ENCODE measurements at regions of chr7 and their contacts with region 1.

Region 1: DNA sequence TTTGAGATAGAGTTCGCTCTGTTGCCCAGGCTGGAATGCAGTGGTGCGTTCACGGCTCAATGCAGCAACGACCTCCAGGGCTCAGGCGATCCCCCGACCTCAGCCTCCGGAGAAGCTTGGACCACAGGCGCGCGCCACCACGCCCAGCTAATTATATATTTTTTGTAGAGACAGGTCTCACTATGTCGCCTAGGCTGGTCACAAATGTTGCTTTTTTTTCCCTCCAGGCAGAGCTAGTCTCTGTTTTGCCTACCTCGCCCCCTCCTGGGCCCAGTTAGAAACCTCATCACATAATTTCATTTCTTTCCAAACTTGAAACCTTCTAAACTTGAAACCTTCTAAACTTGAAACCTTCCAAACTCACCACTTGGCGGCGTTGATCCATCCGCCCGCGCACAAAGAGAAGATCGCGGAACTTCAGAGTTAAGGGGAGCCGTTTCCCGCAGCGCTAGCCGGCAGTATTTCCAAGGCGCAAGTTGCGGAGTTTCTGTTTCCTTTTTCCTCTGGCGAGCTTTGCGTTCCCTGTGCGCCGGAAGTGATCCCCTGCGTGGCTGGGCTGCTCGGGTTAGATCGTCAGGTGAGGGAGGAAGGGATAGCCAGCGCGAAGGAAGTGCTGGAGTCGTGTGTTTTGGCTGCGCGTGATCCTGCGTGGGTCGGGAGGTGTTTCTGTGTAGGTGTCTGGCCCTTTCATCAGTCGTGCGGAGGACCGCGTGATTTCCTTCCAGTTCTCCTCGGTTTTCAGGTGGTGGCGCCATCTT is at the start of gene SSBP1:
- DNase-seq: peak; percentile 97
- ATAC-seq: peak; percentile 86
- H3K4me3 ChIP-seq: peak within 1 kb of the TSS; percentile 66 to 93 (median 90)
- H3K4me3 Mint-ChIP-seq: peak within 1 kb of the TSS; percentile 95
- H3K27ac ChIP-seq: peak within 1 kb of the TSS; percentile 84 to 92
- H3K27ac Mint-ChIP-seq: peak within 1 kb of the TSS; percentile 97
- H3K4me1 ChIP-seq: peaks cover 19 to 20% of the 10 kb centered on the region in 2 donors
- H3K4me1 Mint-ChIP-seq: peaks cover 37% of the 10 kb centered on the region
- H3K27me3 ChIP-seq: no peaks in the 10 kb centered on the region
- H3K27me3 Mint-ChIP-seq: no peaks in the 10 kb centered on the region
- CTCF ChIP-seq: peak; percentile 92
- total RNA-seq, gene SSBP1: 89.1 and 93.6 TPM in 2 replicates

Region 2: DNA sequence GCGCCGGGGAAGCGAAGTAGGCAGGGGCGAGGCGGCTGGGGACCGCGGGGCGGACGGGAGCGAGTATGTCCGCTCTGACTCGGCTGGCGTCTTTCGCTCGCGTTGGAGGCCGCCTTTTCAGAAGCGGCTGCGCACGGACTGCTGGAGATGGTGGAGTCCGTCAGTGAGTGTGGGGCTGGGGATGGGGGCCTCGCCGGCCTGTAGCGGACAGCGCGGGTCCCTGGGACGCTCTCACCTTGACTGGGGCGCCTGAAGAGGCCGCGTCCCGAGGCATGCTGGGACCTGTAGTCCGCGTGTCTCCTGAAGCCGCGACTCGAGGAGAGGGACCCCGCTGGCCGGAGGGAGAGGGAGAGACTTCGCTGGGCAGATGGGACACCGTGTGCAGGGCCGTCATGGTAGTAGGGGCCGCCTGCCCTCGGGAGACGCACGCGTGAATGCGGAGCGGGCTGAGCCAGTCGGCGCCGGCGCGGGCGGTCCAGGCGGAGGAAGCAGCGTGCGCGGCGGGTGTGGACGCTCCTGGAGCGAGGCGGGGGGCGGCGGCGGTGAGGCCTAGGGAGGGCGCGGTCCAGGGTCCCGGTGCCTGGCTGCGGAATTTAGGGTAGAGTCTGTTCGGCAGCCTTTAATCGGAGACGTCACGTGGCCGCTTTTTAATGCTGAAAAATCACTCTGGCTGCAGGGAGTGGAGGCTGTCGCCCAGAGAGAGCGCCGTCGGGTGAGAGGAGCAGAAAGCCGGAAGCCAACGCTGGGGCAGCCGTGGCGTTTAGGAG is 1041.2 kb before region 1 on chr7 and contains the start of gene NDUFB2:
- CTCF ChIA-PET with region 1: no interaction called
- POLR2A ChIA-PET with region 1: no interaction called
- intact Hi-C with region 1: loop called (anchors 1 kb)
- DNase-seq: peak; percentile 93
- ATAC-seq: peak; percentile 85
- H3K4me3 ChIP-seq: peak within 1 kb of the TSS; percentile 55 to 97 (median 94)
- H3K4me3 Mint-ChIP-seq: peak within 1 kb of the TSS; percentile 99
- H3K27ac ChIP-seq: peak within 1 kb of the TSS; percentile 84
- H3K27ac Mint-ChIP-seq: peak within 1 kb of the TSS; percentile 97
- H3K4me1 ChIP-seq: peaks cover 15 to 21% of the 10 kb centered on the region in 2 donors
- H3K4me1 Mint-ChIP-seq: peaks cover 37% of the 10 kb centered on the region
- H3K27me3 ChIP-seq: no peaks in the 10 kb centered on the region
- H3K27me3 Mint-ChIP-seq: no peaks in the 10 kb centered on the region
- CTCF ChIP-seq: no peak
- total RNA-seq, gene NDUFB2: 67.9 and 77.3 TPM in 2 replicates

Region 3: GRCh38 chr7:141551094-141551781 is 186.8 kb before region 1 on chr7 and contains the start of gene AGK:
- CTCF ChIA-PET with region 1: no interaction called
- POLR2A ChIA-PET with region 1: no interaction called
- intact Hi-C with region 1: loop called (anchors 1 kb)
- DNase-seq: peak; percentile 75
- ATAC-seq: peak; percentile 87
- H3K4me3 ChIP-seq: peak within 1 kb of the TSS; percentile 49 to 80 (median 75)
- H3K4me3 Mint-ChIP-seq: peak within 1 kb of the TSS; percentile 87
- H3K27ac ChIP-seq: peak within 1 kb of the TSS in 1 of 2 donors; percentile 78
- H3K27ac Mint-ChIP-seq: peak within 1 kb of the TSS; percentile 75
- H3K4me1 ChIP-seq: peaks cover 12% of the 10 kb centered on the region in 2 donors
- H3K4me1 Mint-ChIP-seq: peaks cover 29% of the 10 kb centered on the region
- H3K27me3 ChIP-seq: no peaks in the 10 kb centered on the region
- H3K27me3 Mint-ChIP-seq: no peaks in the 10 kb centered on the region
- CTCF ChIP-seq: no peak
- total RNA-seq, gene AGK: 26.1 and 30.2 TPM in 2 replicates

Region 4: GRCh38 chr7:141701489-141702046 is 36.4 kb before region 1 on chr7:
- CTCF ChIA-PET with region 1: interaction called, 43 read pairs
- POLR2A ChIA-PET with region 1: interaction called, 21 read pairs
- intact Hi-C with region 1: loop called (anchors 1 kb)
- DNase-seq: peak; percentile 83
- ATAC-seq: peak; percentile 86
- H3K4me3 ChIP-seq: peak overlapping the region in 4 of 5 experiments; percentile 47 to 78 (median 64)
- H3K4me3 Mint-ChIP-seq: peak overlapping the region; percentile 84
- H3K27ac ChIP-seq: peak overlapping the region; percentile 52 to 87
- H3K27ac Mint-ChIP-seq: peak overlapping the region; percentile 79
- H3K4me1 ChIP-seq: peaks cover 35 to 38% of the 10 kb centered on the region in 2 donors
- H3K4me1 Mint-ChIP-seq: peaks cover 56% of the 10 kb centered on the region
- H3K27me3 ChIP-seq: no peaks in the 10 kb centered on the region
- H3K27me3 Mint-ChIP-seq: no peaks in the 10 kb centered on the region
- CTCF ChIP-seq: no peak